ENCODE measurements at regions of chr1 and their contacts with region 1.

Region 1: GRCh38 chr1:145978854-145979759 is 14.6 kb downstream of the POLR3GL start:
- DNase-seq: peak; percentile 78 to 94 (median 81)
- H3K4me3 ChIP-seq: peak overlapping the region; percentile 52 to 62
- H3K4me3 Mint-ChIP-seq: no peak overlapping the region
- H3K27ac ChIP-seq: peak overlapping the region; percentile 70
- H3K27ac Mint-ChIP-seq: no peak overlapping the region
- H3K4me1 ChIP-seq: peaks cover 77% of the 10 kb centered on the region
- H3K4me1 Mint-ChIP-seq: peaks cover 13 to 31% (median 21%) of the 10 kb centered on the region in 4 donors
- H3K27me3 ChIP-seq: no peaks in the 10 kb centered on the region
- H3K27me3 Mint-ChIP-seq: no peaks in the 10 kb centered on the region

Region 2: DNA sequence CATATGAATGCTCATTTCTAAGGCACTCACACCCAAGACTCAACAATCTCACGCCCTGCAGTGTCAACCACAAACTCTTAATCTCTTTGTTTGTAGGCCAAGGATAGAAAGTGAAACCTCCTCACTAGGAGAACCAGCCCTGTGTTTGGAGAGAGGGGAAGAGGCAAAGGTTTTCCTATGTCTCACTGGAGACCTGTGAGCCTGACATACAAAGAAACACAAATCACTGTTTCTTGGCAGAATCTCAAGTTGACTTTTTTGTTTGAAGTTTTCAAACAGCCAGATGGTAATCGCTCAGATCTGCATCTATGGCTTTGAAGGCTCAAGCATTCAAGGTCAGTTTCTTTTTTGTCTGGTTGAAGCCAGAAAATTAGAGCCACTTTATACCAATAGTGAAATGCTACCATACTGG is 288.5 kb before region 1 on chr1:
- CTCF ChIA-PET with region 1: no interaction called
- POLR2A ChIA-PET with region 1: no interaction called
- intact Hi-C with region 1: no loop called
- DNase-seq: peak; percentile 38 to 57 (median 52)
- H3K4me3 ChIP-seq: no peak overlapping the region
- H3K4me3 Mint-ChIP-seq: peak overlapping the region; percentile 17 to 85 (median 66)
- H3K27ac ChIP-seq: peak overlapping the region; percentile 7
- H3K27ac Mint-ChIP-seq: peak overlapping the region; percentile 38 to 96 (median 83)
- H3K4me1 ChIP-seq: peaks cover 27% of the 10 kb centered on the region
- H3K4me1 Mint-ChIP-seq: peaks cover 18 to 42% (median 32%) of the 10 kb centered on the region in 4 donors
- H3K27me3 ChIP-seq: no peaks in the 10 kb centered on the region
- H3K27me3 Mint-ChIP-seq: no peaks in the 10 kb centered on the region

Region 3: GRCh38 chr1:145845514-145846161 is 133.5 kb before region 1 on chr1 and contains the start of gene NUDT17:
- CTCF ChIA-PET with region 1: interaction called, 55 read pairs
- POLR2A ChIA-PET with region 1: interaction called, 7 read pairs
- intact Hi-C with region 1: no loop called
- DNase-seq: peak; percentile 67 to 75 (median 68)
- H3K4me3 ChIP-seq: peak within 1 kb of the TSS; percentile 18 to 77
- H3K4me3 Mint-ChIP-seq: no peak within 1 kb of the TSS
- H3K27ac ChIP-seq: peak within 1 kb of the TSS; percentile 63
- H3K27ac Mint-ChIP-seq: peak within 1 kb of the TSS in 6 of 7 donors; percentile 43 to 91 (median 81)
- H3K4me1 ChIP-seq: peaks cover 11% of the 10 kb centered on the region
- H3K4me1 Mint-ChIP-seq: peaks cover 6 to 7% (median 6%) of the 10 kb centered on the region in 4 donors
- H3K27me3 ChIP-seq: no peaks in the 10 kb centered on the region
- H3K27me3 Mint-ChIP-seq: no peaks in the 10 kb centered on the region
- total RNA-seq, gene NUDT17: 3.1 to 5.6 TPM

Region 4: DNA sequence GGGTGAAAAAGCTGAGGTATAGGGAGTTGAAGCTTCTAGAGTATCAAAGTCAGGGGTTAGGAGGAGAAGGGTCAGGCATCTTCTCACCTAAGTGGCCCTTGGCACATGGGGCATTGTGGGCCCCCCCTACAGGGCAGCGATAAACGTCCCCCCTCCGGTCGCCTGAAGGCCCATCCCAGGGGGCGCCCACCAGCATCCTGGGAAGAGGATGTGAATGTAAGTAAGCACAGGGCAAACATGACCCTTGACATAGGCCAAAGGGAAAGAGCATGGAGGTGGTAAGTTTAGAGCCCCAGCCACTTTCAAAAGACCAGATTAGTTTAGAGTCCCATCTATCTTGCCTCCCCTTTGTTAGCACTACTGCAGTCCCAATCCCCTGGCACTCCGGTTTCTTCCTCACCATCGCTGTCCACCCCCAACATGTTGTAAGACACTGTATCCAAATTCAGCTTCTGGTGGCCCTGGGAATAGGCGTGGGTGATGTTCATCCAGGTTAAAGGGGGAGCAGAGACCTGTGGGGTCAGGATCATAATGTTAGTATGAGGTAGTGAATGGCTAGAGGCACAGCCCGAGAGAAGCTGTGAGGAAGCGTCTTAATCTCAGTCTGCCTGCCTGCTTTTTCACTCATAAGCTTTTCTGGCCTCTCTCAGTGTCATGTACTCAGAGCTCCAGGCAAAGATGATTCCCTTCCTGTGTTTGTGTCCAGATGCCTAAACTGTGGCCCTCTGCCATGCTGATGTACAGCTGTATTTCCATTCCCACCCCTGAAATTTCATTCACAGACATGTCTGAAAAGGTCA is 72.0 kb before region 1 on chr1:
- CTCF ChIA-PET with region 1: interaction called, 13 read pairs
- POLR2A ChIA-PET with region 1: no interaction called
- intact Hi-C with region 1: no loop called
- DNase-seq: no peak
- H3K4me3 ChIP-seq: no peak overlapping the region
- H3K4me3 Mint-ChIP-seq: no peak overlapping the region
- H3K27ac ChIP-seq: no peak overlapping the region
- H3K27ac Mint-ChIP-seq: no peak overlapping the region
- H3K4me1 ChIP-seq: no peaks in the 10 kb centered on the region
- H3K4me1 Mint-ChIP-seq: peaks cover 4 to 5% (median 5%) of the 10 kb centered on the region in 4 donors
- H3K27me3 ChIP-seq: no peaks in the 10 kb centered on the region
- H3K27me3 Mint-ChIP-seq: no peaks in the 10 kb centered on the region

Region 5: GRCh38 chr1:145957443-145958319 is 21.4 kb before region 1 on chr1 and contains the start of gene LIX1L:
- CTCF ChIA-PET with region 1: interaction called, 98 read pairs
- POLR2A ChIA-PET with region 1: interaction called, 203 read pairs
- intact Hi-C with region 1: loop called (anchors 2 kb)
- DNase-seq: peak; percentile 92 to 98 (median 94)
- H3K4me3 ChIP-seq: peak within 1 kb of the TSS; percentile 31 to 63
- H3K4me3 Mint-ChIP-seq: peak within 1 kb of the TSS; percentile 89 to 99 (median 96)
- H3K27ac ChIP-seq: peak within 1 kb of the TSS; percentile 81
- H3K27ac Mint-ChIP-seq: peak within 1 kb of the TSS; percentile 89 to 99 (median 97)
- H3K4me1 ChIP-seq: peaks cover 65% of the 10 kb centered on the region
- H3K4me1 Mint-ChIP-seq: peaks cover 55 to 88% (median 65%) of the 10 kb centered on the region in 4 donors
- H3K27me3 ChIP-seq: no peaks in the 10 kb centered on the region
- H3K27me3 Mint-ChIP-seq: no peaks in the 10 kb centered on the region
- total RNA-seq, gene LIX1L: 64.5 to 66.1 TPM

Region 6: GRCh38 chr1:146007506-146008133 is 28.5 kb after region 1 on chr1:
- CTCF ChIA-PET with region 1: interaction called, 447 read pairs
- POLR2A ChIA-PET with region 1: interaction called, 1,967 read pairs
- intact Hi-C with region 1: loop called (anchors 1 kb)
- DNase-seq: no peak
- H3K4me3 ChIP-seq: no peak overlapping the region
- H3K4me3 Mint-ChIP-seq: peak overlapping the region in 6 of 8 donors; percentile 79 to 87 (median 84)
- H3K27ac ChIP-seq: no peak overlapping the region
- H3K27ac Mint-ChIP-seq: peak overlapping the region; percentile 45 to 95 (median 88)
- H3K4me1 ChIP-seq: peaks cover 47% of the 10 kb centered on the region
- H3K4me1 Mint-ChIP-seq: peaks cover 24 to 54% (median 33%) of the 10 kb centered on the region in 4 donors
- H3K27me3 ChIP-seq: no peaks in the 10 kb centered on the region
- H3K27me3 Mint-ChIP-seq: no peaks in the 10 kb centered on the region

Region 7: GRCh38 chr1:146036965-146037646 is 58.0 kb after region 1 on chr1:
- CTCF ChIA-PET with region 1: interaction called, 40 read pairs
- POLR2A ChIA-PET with region 1: interaction called, 50 read pairs
- intact Hi-C with region 1: no loop called
- DNase-seq: peak; percentile 82 to 85 (median 84)
- H3K4me3 ChIP-seq: peak overlapping the region; percentile 65 to 77
- H3K4me3 Mint-ChIP-seq: peak overlapping the region; percentile 93 to 99 (median 97)
- H3K27ac ChIP-seq: peak overlapping the region; percentile 62
- H3K27ac Mint-ChIP-seq: peak overlapping the region; percentile 94 to 100 (median 97)
- H3K4me1 ChIP-seq: peaks cover 25% of the 10 kb centered on the region
- H3K4me1 Mint-ChIP-seq: peaks cover 16 to 56% (median 29%) of the 10 kb centered on the region in 4 donors
- H3K27me3 ChIP-seq: no peaks in the 10 kb centered on the region
- H3K27me3 Mint-ChIP-seq: peaks cover 2 to 27% of the 10 kb centered on the region in 2 donors

Region 8: GRCh38 chr1:147242439-147243227 is 1263.5 kb after region 1 on chr1 and contains the start of gene CHD1L:
- CTCF ChIA-PET with region 1: no interaction called
- POLR2A ChIA-PET with region 1: no interaction called
- intact Hi-C with region 1: no loop called
- DNase-seq: peak; percentile 91 to 93 (median 92)
- H3K4me3 ChIP-seq: peak within 1 kb of the TSS; percentile 21 to 84
- H3K4me3 Mint-ChIP-seq: peak within 1 kb of the TSS; percentile 92 to 97 (median 96)
- H3K27ac ChIP-seq: peak within 1 kb of the TSS; percentile 70
- H3K27ac Mint-ChIP-seq: peak within 1 kb of the TSS; percentile 60 to 93 (median 79)
- H3K4me1 ChIP-seq: peaks cover 37% of the 10 kb centered on the region
- H3K4me1 Mint-ChIP-seq: peaks cover 29 to 49% (median 31%) of the 10 kb centered on the region in 4 donors
- H3K27me3 ChIP-seq: no peaks in the 10 kb centered on the region
- H3K27me3 Mint-ChIP-seq: peaks cover 0 to 1% of the 10 kb centered on the region in 2 donors
- total RNA-seq, gene CHD1L: 29.5 to 31.6 TPM

Measured in CD4-positive, alpha-beta memory T cell (primary cell).